ENCODE measurements at regions of chr1 and their contacts with region 1.

Region 1: GRCh38 chr1:112522621-112523020 is 13.9 kb downstream of the WNT2B start:
- DNase-seq: no peak
- H3K4me3 ChIP-seq: no peak overlapping the region
- H3K27ac ChIP-seq: no peak overlapping the region
- H3K4me1 ChIP-seq: peaks cover 8 to 14% (median 10%) of the 10 kb centered on the region in 4 experiments; a peak in 6 of 7 replicates
- H3K27me3 ChIP-seq: no peaks in the 10 kb centered on the region
- CTCF ChIP-seq: no peak
- EP300 ChIP-seq: no peak
- POLR2A ChIP-seq: no peak
- RAD21 ChIP-seq: no peak

Region 2: DNA sequence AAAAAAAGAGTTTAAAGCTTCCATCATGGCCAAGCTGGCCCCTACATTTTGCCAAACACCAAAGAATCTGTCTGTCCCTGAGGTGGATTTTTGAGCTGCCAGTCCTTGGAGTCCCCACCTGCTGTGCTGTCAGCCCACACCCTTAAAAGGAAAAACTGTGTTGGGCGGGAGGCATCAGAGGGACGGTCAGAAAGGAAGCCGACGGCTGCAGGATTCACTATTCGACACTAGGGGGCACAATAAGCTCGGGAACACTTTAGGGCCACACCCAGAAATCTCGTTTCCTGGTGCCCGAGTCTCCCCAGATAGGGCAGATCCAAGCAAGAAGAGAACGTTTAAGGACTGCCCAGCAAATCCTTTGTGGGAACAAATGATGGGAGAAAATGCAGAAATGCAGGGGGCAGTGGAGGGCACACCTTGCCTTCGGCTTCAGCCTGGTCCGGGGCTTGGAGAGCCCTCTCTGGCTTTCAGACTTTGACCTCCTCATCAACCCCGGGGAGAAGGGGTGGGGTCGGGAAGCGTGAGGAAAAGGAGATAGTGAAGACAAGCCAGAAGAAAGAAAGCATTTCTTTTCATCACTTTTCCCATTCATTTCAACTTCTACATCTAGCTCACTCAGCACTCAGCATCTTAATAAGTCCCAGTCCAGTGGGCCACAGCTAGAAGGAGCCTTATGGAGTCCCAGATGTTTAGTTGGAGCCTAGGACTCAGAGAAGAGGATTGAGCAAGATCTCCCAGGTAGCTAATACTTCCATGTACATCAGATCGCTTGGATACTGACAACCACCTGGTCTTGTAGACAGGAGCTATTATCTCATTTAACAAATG is 131.6 kb before region 1 on chr1:
- CTCF ChIA-PET with region 1: no interaction called
- POLR2A ChIA-PET with region 1: no interaction called
- DNase-seq: peak; percentile 85 to 93
- H3K4me3 ChIP-seq: peak overlapping the region in 3 of 4 experiments; percentile 8 to 54 (median 15); a peak in 4 of 8 replicates
- H3K27ac ChIP-seq: no peak overlapping the region
- H3K4me1 ChIP-seq: peaks cover 2 to 14% (median 8%) of the 10 kb centered on the region in 4 experiments; a peak in 5 of 7 replicates
- H3K27me3 ChIP-seq: no peaks in the 10 kb centered on the region
- CTCF ChIP-seq: peak; percentile 72 to 97 (median 78)
- EP300 ChIP-seq: no peak
- POLR2A ChIP-seq: no peak
- RAD21 ChIP-seq: peak; percentile 92 to 94

Region 3: DNA sequence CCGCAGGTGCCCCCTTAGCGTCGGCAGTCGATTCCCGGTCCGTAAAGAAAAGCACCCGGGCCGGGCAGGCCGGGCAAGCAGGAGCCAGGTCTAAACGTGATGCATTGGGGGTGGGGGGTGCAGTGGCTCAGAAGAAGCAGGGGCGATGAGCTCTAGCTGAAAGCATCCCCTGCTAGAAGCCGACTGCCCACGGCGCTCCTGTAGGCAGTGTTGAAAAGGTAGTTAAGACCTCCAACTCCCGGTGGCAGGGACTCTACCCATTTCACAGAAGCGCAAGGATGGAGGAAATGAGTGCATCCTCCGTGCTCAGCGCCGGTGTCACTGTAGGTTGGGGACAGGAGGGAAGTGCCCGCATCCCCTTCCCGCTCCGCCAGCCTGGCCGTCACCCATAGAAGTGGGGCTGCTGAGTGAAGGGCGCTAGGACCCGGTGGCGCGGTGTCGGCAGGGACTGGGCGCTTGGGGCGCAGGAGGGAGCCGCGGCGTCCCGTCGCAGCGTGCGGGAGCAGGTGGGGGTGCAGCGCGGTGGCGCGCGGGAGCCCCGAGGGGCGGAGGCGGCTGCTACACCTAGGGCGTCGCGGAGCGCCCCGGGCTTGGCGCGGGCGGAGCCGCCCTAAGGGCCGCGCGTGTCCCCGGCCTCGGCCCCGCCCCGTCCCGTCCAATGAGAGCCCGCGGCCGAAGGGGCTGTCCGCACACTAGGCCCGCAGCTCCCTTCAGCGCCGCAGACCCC is 14.2 kb before region 1 on chr1 and contains the start of gene WNT2B:
- CTCF ChIA-PET with region 1: interaction called, 5 read pairs
- POLR2A ChIA-PET with region 1: interaction called, 22 read pairs
- DNase-seq: peak in 1 of 2 experiments; percentile 88
- H3K4me3 ChIP-seq: peak within 1 kb of the TSS; percentile 72 to 84 (median 82)
- H3K27ac ChIP-seq: no peak within 1 kb of the TSS
- H3K4me1 ChIP-seq: peaks cover 0 to 25% (median 9%) of the 10 kb centered on the region in 4 experiments; a peak in 5 of 7 replicates
- H3K27me3 ChIP-seq: peaks cover 31 to 94% (median 74%) of the 10 kb centered on the region in 4 experiments
- CTCF ChIP-seq: no peak
- EP300 ChIP-seq: no peak
- POLR2A ChIP-seq: no peak
- RAD21 ChIP-seq: no peak
- total RNA-seq, gene WNT2B: 0.90 and 2.0 TPM in 2 replicates